ENCODE measurements at regions of chr19 and their contacts with region 1.

Region 1: GRCh38 chr19:47973529-47973928 is 18.4 kb downstream of the BSPH1 start:
- DNase-seq: no peak

Region 2: GRCh38 chr19:48064509-48064908 is 91.0 kb after region 1 on chr19:
- in situ Hi-C with region 1: no loop called
- DNase-seq: no peak

Region 3: DNA sequence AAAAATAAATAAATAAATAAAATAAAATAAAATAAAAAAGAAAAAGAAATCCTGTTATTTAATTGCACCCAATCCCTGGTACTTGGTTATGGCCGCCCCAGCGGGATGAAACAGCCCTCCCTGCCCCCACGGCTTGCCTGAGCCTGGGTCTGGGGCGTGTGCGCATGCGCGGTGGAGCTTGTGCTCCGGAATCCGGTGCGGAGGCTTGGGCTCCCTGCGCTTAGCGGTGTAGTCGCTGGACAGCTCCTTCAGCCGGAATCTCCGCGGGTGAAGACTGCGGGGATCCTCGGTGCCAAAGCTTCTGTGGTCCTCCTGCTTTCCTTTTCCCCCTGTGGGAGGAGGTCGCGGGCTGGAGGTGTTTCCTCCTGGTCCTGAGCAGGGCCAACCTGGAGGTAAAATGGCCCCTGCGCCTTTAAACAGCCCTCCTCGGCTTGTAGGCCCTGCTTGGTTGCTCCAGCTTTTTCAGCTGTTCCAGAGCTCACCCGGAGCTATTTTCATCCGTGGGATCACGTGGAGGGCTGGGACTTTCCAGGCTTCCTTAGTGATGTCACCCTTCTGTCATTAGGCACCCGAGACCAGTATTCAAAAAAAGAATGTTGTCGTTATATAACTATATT is 136.9 kb after region 1 on chr19 and contains the start of gene PLA2G4C:
- in situ Hi-C with region 1: loop called (anchors 25 kb)
- DNase-seq: peak; percentile 84

Region 4: GRCh38 chr19:48239580-48240141 is 266.1 kb after region 1 on chr19:
- in situ Hi-C with region 1: no loop called
- DNase-seq: no peak

Measured in KBM-7 (cell line).